ENCODE measurements at regions of chr2 and their contacts with region 1.

Region 1: GRCh38 chr2:7121851-7122250 is 204.6 kb downstream of the RNF144A start:
- DNase-seq: no peak
- H3K4me3 ChIP-seq: no peak overlapping the region
- H3K27ac ChIP-seq: no peak overlapping the region
- H3K4me1 ChIP-seq: no peaks in the 10 kb centered on the region
- H3K27me3 ChIP-seq: no peaks in the 10 kb centered on the region
- CTCF ChIP-seq: no peak
- POLR2A ChIP-seq: no peak

Region 2: DNA sequence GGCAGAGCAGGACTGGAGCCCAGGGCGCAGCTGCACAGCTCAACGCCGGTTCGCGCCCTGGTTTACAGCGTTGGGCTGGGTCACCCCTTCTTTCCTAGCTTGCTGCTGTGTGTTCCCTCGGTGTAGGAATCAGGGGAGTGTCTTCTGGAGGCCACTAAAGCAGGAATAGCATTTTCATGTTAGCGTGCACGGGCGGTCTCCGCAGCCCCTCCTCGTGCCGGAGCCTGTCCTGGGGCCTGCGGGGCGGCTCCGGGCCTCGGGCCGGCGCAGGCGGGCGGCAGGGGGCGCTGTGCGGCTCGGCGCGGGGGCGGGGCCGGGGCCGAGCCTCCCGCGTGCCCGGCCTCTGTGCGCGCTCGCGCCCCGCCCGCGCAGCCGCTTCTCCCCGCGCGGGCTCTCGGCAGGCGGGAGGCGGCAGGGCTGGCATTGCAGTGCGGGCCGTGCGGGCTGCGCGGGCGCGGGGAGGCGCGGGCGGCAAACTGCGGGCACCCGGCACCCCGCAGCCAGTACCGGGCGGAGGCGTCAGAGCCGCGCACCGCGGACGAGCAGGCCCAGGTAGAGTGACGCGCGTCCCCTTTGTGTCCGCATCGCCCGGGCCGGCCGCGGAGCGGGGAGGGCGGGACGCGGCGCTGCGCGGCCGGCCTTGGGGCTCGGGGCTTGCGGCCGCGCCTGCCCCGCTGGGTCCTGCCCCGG is 204.6 kb before region 1 on chr2 and contains the start of gene RNF144A:
- intact Hi-C with region 1: no loop called
- DNase-seq: no peak
- H3K4me3 ChIP-seq: peak within 1 kb of the TSS; percentile 78 to 90
- H3K27ac ChIP-seq: peak within 1 kb of the TSS; percentile 87
- H3K4me1 ChIP-seq: peaks cover 38% of the 10 kb centered on the region
- H3K27me3 ChIP-seq: no peaks in the 10 kb centered on the region
- CTCF ChIP-seq: peak in 2 of 3 experiments; percentile 30 to 61
- POLR2A ChIP-seq: peak in 1 of 2 donors; percentile 23
- total RNA-seq, gene RNF144A: 17.2 TPM

Region 3: DNA sequence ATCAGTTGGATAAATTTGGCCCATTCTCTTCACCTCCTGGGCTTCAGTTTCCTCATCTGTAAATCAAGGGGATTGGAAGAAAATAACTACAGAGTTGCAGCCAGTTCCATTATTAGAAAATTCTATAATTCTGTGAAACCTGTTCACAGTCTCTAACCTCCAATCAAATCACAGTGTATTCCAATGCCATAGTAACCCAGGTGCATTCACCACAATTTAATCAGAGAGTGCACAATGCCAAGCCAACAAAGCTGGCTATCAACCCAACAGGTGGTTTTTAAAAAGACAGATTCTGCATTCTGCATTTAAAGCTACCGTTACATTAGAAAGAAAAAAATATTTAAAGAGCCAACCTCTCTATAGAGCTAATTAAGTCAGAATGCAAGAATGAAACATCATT is 104.0 kb after region 1 on chr2:
- intact Hi-C with region 1: no loop called
- DNase-seq: no peak
- H3K4me3 ChIP-seq: no peak overlapping the region
- H3K27ac ChIP-seq: no peak overlapping the region
- H3K4me1 ChIP-seq: no peaks in the 10 kb centered on the region
- H3K27me3 ChIP-seq: no peaks in the 10 kb centered on the region
- CTCF ChIP-seq: no peak
- POLR2A ChIP-seq: no peak

Region 4: DNA sequence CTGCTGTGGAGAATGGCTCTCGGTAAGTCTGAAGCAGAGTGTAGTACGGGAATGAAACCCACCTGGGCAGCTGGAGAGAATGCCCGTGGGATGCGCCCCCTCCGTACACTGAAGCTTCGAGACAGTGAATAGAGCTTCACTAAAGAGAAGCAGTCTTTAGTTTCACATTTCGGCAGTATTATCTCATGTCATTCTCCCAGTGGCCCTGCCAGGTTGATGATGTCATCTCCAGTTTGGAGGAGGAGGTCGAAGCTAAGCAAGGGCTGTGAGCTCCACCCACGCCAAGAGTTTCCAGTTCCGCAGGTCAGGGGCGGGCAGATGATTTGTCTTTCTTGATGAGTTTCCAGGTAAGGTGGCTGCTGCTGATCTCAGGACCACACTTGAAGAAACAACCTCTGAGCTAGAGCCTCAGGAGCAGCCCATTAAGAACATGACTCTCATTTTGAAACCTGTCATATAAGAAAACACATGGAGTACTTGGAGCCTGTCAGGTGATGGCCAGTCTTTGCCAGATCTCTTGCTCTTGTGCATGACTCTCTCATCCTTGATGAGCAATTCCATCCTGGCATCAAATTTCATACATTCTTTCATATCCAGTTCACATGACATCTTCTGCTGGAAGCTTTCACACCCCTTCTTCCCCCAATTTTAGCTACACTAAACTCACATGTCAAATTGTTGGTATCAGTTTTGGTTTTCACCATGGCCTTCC is 270.4 kb after region 1 on chr2:
- intact Hi-C with region 1: no loop called
- DNase-seq: no peak
- H3K4me3 ChIP-seq: no peak overlapping the region
- H3K27ac ChIP-seq: no peak overlapping the region
- H3K4me1 ChIP-seq: no peaks in the 10 kb centered on the region
- H3K27me3 ChIP-seq: no peaks in the 10 kb centered on the region
- CTCF ChIP-seq: no peak
- POLR2A ChIP-seq: no peak

Region 5: DNA sequence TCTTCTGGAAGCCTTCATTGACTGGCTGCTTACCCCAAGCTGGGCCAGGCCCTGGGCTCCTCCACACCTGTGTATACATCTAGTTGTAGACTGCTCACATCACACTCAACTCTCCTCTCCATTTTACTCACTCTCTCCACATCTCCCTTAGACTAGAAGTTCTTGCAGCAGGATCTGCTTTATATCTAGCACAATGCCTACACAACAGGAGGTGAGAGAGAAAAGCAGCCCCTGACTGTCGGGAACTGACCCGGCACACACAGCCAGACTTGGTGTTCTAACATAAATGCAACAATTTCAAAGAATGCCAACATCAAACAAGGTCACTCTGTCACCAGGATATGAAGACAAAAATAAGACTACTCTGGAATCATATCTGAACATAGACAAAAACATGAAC is 1709.7 kb after region 1 on chr2:
- intact Hi-C with region 1: loop called (anchors 5 kb)
- DNase-seq: no peak
- H3K4me3 ChIP-seq: no peak overlapping the region
- H3K27ac ChIP-seq: no peak overlapping the region
- H3K4me1 ChIP-seq: peaks cover 46% of the 10 kb centered on the region
- H3K27me3 ChIP-seq: no peaks in the 10 kb centered on the region
- CTCF ChIP-seq: no peak
- POLR2A ChIP-seq: no peak

Region 6: GRCh38 chr2:8872821-8873432 is 1751.1 kb after region 1 on chr2:
- intact Hi-C with region 1: no loop called
- DNase-seq: no peak
- H3K4me3 ChIP-seq: no peak overlapping the region
- H3K27ac ChIP-seq: no peak overlapping the region
- H3K4me1 ChIP-seq: no peaks in the 10 kb centered on the region
- H3K27me3 ChIP-seq: no peaks in the 10 kb centered on the region
- CTCF ChIP-seq: peak in 2 of 3 experiments; percentile 3 to 30
- POLR2A ChIP-seq: no peak